Colonic mucosa (tissue), 4 donors: ENCODE measurements at regions of chr2 and their contacts with region 1.

Region 1: GRCh38 chr2:44044281-44044720 is 48.5 kb upstream of the LRPPRC start:
- DNase-seq: peak; percentile 87
- H3K4me3 ChIP-seq: no peak overlapping the region
- H3K27ac ChIP-seq: no peak overlapping the region
- H3K4me1 ChIP-seq: no peaks in the 10 kb centered on the region
- H3K27me3 ChIP-seq: no peaks in the 10 kb centered on the region
- CTCF ChIP-seq: peak; percentile 84

Region 2: GRCh38 chr2:44342854-44343253 is 298.6 kb after region 1 on chr2:
- intact Hi-C with region 1: loop called (anchors 5 kb)
- DNase-seq: no peak
- H3K4me3 ChIP-seq: no peak overlapping the region
- H3K27ac ChIP-seq: no peak overlapping the region
- H3K4me1 ChIP-seq: no peaks in the 10 kb centered on the region
- H3K27me3 ChIP-seq: no peaks in the 10 kb centered on the region
- CTCF ChIP-seq: no peak